ENCODE measurements at regions of chr10 and their contacts with region 1.

Region 1: DNA sequence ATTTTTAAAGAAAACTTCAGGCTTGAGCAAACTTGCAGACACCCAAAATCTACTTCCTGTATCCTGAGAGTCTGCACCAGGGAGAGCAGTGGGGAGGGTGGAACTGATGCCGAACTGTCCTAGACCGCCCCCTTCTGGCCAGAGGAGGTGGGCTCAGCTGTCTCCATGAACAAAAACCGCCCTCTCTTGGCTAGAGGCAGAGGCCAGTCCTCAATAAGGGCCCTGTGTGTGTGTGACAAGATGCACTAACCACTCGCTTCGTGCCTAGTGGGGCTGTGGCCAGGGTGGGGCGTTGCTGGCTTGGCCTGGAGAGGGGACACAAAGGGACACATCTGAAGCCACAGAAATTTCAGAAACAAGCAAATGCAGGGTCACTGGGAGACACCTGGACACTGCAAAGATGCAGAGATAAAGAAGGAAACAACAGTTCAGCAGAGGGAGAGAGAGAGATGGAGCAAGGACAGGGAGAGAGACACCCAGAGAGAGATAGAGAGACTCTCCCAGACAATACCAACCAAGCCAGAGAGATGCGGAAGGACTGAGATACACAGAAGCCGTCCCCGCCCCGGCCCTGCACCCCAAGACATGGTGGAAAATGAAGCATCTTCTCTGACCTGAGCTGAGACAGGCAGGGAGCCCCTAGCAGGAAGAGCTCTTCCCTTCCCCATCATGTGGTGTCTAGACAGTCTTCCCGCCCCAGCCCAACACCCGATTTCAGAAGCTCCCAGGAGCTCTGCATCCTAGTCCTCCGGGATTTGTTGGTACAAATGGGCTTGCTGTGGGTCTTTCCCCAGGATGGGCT is 22.7 kb upstream of the FXYD4 start:
- DNase-seq: peak; percentile 73 to 93 (median 87)
- ATAC-seq: peak; percentile 100
- H3K4me3 ChIP-seq: no peak overlapping the region
- H3K4me3 Mint-ChIP-seq: no peak overlapping the region
- H3K27ac ChIP-seq: no peak overlapping the region
- H3K27ac Mint-ChIP-seq: no peak overlapping the region
- H3K4me1 ChIP-seq: peaks cover 13% of the 10 kb centered on the region
- H3K4me1 Mint-ChIP-seq: peaks cover 12% of the 10 kb centered on the region
- H3K27me3 ChIP-seq: no peaks in the 10 kb centered on the region
- H3K27me3 Mint-ChIP-seq: peaks cover 15% of the 10 kb centered on the region
- CTCF ChIP-seq: peak; percentile 91

Region 2: DNA sequence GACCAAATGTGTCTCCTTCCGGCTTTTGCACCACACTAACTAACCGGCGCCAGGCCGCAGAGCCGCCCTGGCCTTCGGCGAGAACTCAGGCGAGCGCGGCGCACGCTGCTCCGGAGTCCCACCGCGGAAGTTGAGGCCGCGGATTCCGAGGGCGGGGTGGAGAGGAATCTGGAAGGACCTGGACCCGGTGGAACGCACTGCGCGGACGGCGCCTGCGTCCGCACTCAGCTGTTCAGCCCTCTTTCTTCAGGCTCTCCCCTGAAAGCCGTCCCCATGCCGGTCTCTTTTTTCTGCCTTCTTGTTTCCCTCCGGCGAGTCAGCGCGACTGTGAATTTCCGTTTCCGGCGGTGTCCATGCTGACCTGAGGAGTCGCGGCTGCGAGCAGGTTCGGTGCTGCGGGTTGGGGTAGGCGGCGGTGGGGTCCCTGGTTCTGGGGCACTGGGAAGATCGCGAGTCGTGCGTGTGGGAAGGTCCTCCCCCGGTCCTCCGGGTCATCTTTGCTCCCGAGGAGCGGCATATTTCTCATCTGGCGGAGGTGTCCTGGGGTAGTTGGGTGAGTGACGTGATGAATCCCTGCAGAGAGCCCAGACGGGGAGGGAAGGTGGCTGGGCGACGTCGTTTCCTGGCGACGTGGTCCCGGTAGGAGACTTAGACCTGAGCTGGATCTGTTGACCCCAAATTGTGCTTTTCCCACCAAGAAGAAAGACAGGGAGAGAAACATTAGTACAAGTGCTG is 566.1 kb before region 1 on chr10 and contains the start of gene BMS1:
- CTCF ChIA-PET with region 1: no interaction called
- POLR2A ChIA-PET with region 1: no interaction called
- intact Hi-C with region 1: loop called in 1 of 2 experiments (anchors 1 kb)
- DNase-seq: peak; percentile 82 to 92 (median 87)
- ATAC-seq: peak; percentile 85
- H3K4me3 ChIP-seq: peak within 1 kb of the TSS; percentile 83 to 88
- H3K4me3 Mint-ChIP-seq: peak within 1 kb of the TSS; percentile 99
- H3K27ac ChIP-seq: peak within 1 kb of the TSS; percentile 78 to 90
- H3K27ac Mint-ChIP-seq: peak within 1 kb of the TSS; percentile 96
- H3K4me1 ChIP-seq: peaks cover 23% of the 10 kb centered on the region
- H3K4me1 Mint-ChIP-seq: peaks cover 42% of the 10 kb centered on the region
- H3K27me3 ChIP-seq: no peaks in the 10 kb centered on the region
- H3K27me3 Mint-ChIP-seq: peaks cover 4% of the 10 kb centered on the region
- CTCF ChIP-seq: no peak
- total RNA-seq, gene BMS1: 18.1 to 19.9 TPM

Region 3: GRCh38 chr10:42933448-42934340 is 415.0 kb before region 1 on chr10:
- CTCF ChIA-PET with region 1: no interaction called
- POLR2A ChIA-PET with region 1: no interaction called
- intact Hi-C with region 1: loop called in 1 of 2 experiments (anchors 10 kb)
- DNase-seq: peak in 6 of 9 experiments; percentile 33 to 79 (median 64)
- ATAC-seq: peak; percentile 64
- H3K4me3 ChIP-seq: peak overlapping the region; percentile 51 to 78
- H3K4me3 Mint-ChIP-seq: peak overlapping the region; percentile 85
- H3K27ac ChIP-seq: peak overlapping the region; percentile 19 to 73
- H3K27ac Mint-ChIP-seq: peak overlapping the region; percentile 80
- H3K4me1 ChIP-seq: peaks cover 17% of the 10 kb centered on the region
- H3K4me1 Mint-ChIP-seq: peaks cover 12% of the 10 kb centered on the region
- H3K27me3 ChIP-seq: no peaks in the 10 kb centered on the region
- H3K27me3 Mint-ChIP-seq: peaks cover 13% of the 10 kb centered on the region
- CTCF ChIP-seq: no peak

Region 4: GRCh38 chr10:43221419-43222209 is 127.1 kb before region 1 on chr10:
- CTCF ChIA-PET with region 1: interaction called, 4 read pairs
- POLR2A ChIA-PET with region 1: interaction called, 5 read pairs
- intact Hi-C with region 1: loop called in 1 of 2 experiments (anchors 1 kb)
- DNase-seq: peak in 2 of 9 experiments; percentile 42 to 43
- ATAC-seq: no peak
- H3K4me3 ChIP-seq: no peak overlapping the region
- H3K4me3 Mint-ChIP-seq: no peak overlapping the region
- H3K27ac ChIP-seq: no peak overlapping the region
- H3K27ac Mint-ChIP-seq: no peak overlapping the region
- H3K4me1 ChIP-seq: no peaks in the 10 kb centered on the region
- H3K4me1 Mint-ChIP-seq: peaks cover 12% of the 10 kb centered on the region
- H3K27me3 ChIP-seq: no peaks in the 10 kb centered on the region
- H3K27me3 Mint-ChIP-seq: peaks cover 5% of the 10 kb centered on the region
- CTCF ChIP-seq: no peak

Region 5: GRCh38 chr10:43287056-43288007 is 61.4 kb before region 1 on chr10:
- CTCF ChIA-PET with region 1: interaction called, 98 read pairs
- POLR2A ChIA-PET with region 1: no interaction called
- intact Hi-C with region 1: no loop called
- DNase-seq: peak; percentile 20 to 81 (median 58)
- ATAC-seq: peak; percentile 84
- H3K4me3 ChIP-seq: no peak overlapping the region
- H3K4me3 Mint-ChIP-seq: peak overlapping the region; percentile 46
- H3K27ac ChIP-seq: peak overlapping the region in 1 of 2 experiments; percentile 68
- H3K27ac Mint-ChIP-seq: peak overlapping the region; percentile 76
- H3K4me1 ChIP-seq: peaks cover 24% of the 10 kb centered on the region
- H3K4me1 Mint-ChIP-seq: peaks cover 39% of the 10 kb centered on the region
- H3K27me3 ChIP-seq: peaks cover 0 to 3% of the 10 kb centered on the region in 2 experiments
- H3K27me3 Mint-ChIP-seq: no peaks in the 10 kb centered on the region
- CTCF ChIP-seq: no peak

Region 6: GRCh38 chr10:43333653-43334052 is 15.1 kb before region 1 on chr10:
- CTCF ChIA-PET with region 1: interaction called, 13 read pairs
- POLR2A ChIA-PET with region 1: no interaction called
- intact Hi-C with region 1: no loop called
- DNase-seq: no peak
- ATAC-seq: no peak
- H3K4me3 ChIP-seq: no peak overlapping the region
- H3K4me3 Mint-ChIP-seq: no peak overlapping the region
- H3K27ac ChIP-seq: no peak overlapping the region
- H3K27ac Mint-ChIP-seq: no peak overlapping the region
- H3K4me1 ChIP-seq: peaks cover 15% of the 10 kb centered on the region
- H3K4me1 Mint-ChIP-seq: peaks cover 17% of the 10 kb centered on the region
- H3K27me3 ChIP-seq: no peaks in the 10 kb centered on the region
- H3K27me3 Mint-ChIP-seq: peaks cover 2% of the 10 kb centered on the region
- CTCF ChIP-seq: no peak

Region 7: DNA sequence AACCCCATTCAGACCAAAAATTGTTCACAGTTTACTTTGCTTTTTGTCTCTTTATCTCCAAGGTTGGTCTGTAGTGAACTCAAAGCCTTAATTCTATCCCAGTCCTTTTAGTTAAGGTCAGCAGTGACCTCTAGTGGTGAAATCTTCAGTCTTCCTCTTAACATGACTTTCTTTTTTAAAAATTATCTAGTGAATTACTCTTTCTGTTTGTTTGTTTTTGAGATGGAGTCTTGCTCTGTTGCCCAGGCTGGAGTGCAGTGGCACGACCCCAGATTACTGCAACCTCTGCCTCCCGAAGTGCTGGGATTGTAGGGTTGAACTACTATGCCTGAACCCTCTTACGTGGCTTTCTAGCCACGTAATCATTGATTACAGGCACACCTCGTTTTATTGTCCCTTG is 113.2 kb after region 1 on chr10:
- CTCF ChIA-PET with region 1: interaction called, 25 read pairs
- POLR2A ChIA-PET with region 1: no interaction called
- intact Hi-C with region 1: loop called (anchors 1 kb)
- DNase-seq: peak in 4 of 9 experiments; percentile 13 to 88 (median 66)
- ATAC-seq: peak; percentile 94
- H3K4me3 ChIP-seq: no peak overlapping the region
- H3K4me3 Mint-ChIP-seq: no peak overlapping the region
- H3K27ac ChIP-seq: no peak overlapping the region
- H3K27ac Mint-ChIP-seq: no peak overlapping the region
- H3K4me1 ChIP-seq: peaks cover 2% of the 10 kb centered on the region
- H3K4me1 Mint-ChIP-seq: peaks cover 11% of the 10 kb centered on the region
- H3K27me3 ChIP-seq: no peaks in the 10 kb centered on the region
- H3K27me3 Mint-ChIP-seq: no peaks in the 10 kb centered on the region
- CTCF ChIP-seq: peak; percentile 68

Measured in CD8-positive, alpha-beta T cell (primary cell).